Sigmoid colon (tissue), 7 donors: ENCODE measurements at regions of chr13 and their contacts with region 1.

Region 1: GRCh38 chr13:23466144-23467002 is 32.9 kb upstream of the SACS start:
- DNase-seq: peak; percentile 82
- H3K4me3 ChIP-seq: peak overlapping the region; percentile 28 to 57 (median 50)
- H3K27ac ChIP-seq: peak overlapping the region; percentile 77 to 86 (median 84)
- H3K4me1 ChIP-seq: peaks cover 0 to 18% (median 9%) of the 10 kb centered on the region in 4 donors
- H3K27me3 ChIP-seq: no peaks in the 10 kb centered on the region
- CTCF ChIP-seq: peak; percentile 54 to 75 (median 62)
- EP300 ChIP-seq: no peak
- POLR2A ChIP-seq: no peak

Region 2: GRCh38 chr13:22050951-22051563 is 1415.3 kb before region 1 on chr13:
- intact Hi-C with region 1: no loop called
- DNase-seq: no peak
- H3K4me3 ChIP-seq: no peak overlapping the region
- H3K27ac ChIP-seq: no peak overlapping the region
- H3K4me1 ChIP-seq: no peaks in the 10 kb centered on the region
- H3K27me3 ChIP-seq: no peaks in the 10 kb centered on the region
- CTCF ChIP-seq: no peak
- EP300 ChIP-seq: no peak
- POLR2A ChIP-seq: no peak

Region 3: GRCh38 chr13:23375001-23375971 is 91.1 kb before region 1 on chr13:
- intact Hi-C with region 1: loop called (anchors 2 kb)
- DNase-seq: peak; percentile 98
- H3K4me3 ChIP-seq: peak overlapping the region; percentile 67 to 91 (median 78)
- H3K27ac ChIP-seq: peak overlapping the region; percentile 86 to 95 (median 90)
- H3K4me1 ChIP-seq: peaks cover 0 to 53% (median 35%) of the 10 kb centered on the region in 4 donors
- H3K27me3 ChIP-seq: no peaks in the 10 kb centered on the region
- CTCF ChIP-seq: peak in 1 of 4 experiments; percentile 19
- EP300 ChIP-seq: no peak
- POLR2A ChIP-seq: peak in 1 of 2 donors; percentile 23

Region 4: GRCh38 chr13:23871616-23872220 is 405.3 kb after region 1 on chr13:
- intact Hi-C with region 1: loop called (anchors 1 kb)
- DNase-seq: no peak
- H3K4me3 ChIP-seq: no peak overlapping the region
- H3K27ac ChIP-seq: no peak overlapping the region
- H3K4me1 ChIP-seq: peaks cover 0 to 13% (median 0%) of the 10 kb centered on the region in 4 donors
- H3K27me3 ChIP-seq: no peaks in the 10 kb centered on the region
- CTCF ChIP-seq: peak in 3 of 4 experiments; percentile 35 to 55 (median 39)
- EP300 ChIP-seq: no peak
- POLR2A ChIP-seq: no peak